ENCODE measurements at regions of chr15 and their contacts with region 1.

Region 1: DNA sequence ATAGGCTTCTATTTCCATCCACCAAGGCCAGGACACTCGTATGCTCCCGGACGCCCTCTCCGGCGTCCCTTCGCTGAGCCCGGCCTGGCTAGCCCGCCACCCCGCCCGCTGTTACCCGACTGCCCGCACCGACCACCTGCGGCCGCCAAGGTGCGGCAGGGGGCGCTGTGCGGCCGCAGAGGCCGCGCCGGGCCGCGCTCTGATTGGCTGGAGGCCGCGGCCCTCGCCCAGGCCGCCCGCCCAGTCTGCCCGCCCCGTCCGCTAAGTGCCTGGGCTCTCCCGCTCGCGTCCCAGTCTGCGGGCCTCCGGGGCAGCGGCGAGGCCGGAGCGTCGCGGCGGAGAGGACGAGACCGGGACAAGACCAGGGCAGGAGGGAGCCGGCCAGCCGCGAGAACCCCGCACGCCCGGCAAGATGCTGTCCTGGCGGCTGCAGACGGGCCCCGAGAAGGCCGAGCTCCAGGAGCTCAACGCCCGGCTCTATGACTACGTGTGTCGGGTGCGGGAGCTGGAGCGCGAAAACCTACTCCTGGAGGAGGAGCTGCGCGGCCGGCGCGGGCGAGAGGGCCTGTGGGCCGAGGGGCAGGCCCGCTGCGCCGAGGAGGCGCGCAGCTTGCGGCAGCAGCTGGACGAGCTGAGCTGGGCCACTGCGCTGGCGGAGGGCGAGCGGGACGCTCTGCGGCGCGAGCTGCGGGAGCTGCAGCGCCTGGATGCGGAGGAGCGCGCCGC is at the start of gene SYNM:
- DNase-seq: no peak
- H3K4me3 ChIP-seq: peak within 1 kb of the TSS; percentile 43
- H3K27me3 ChIP-seq: peaks cover 9% of the 10 kb centered on the region; the same call in 1 of the 2 replicates
- CTCF ChIP-seq: peak; percentile 47
- polyA plus RNA-seq, gene SYNM: 1.8 TPM in 2 replicates

Region 2: GRCh38 chr15:99123706-99124451 is 18.9 kb after region 1 on chr15:
- CTCF ChIA-PET with region 1: interaction called, 15 read pairs
- POLR2A ChIA-PET with region 1: no interaction called
- DNase-seq: peak; percentile 92
- H3K4me3 ChIP-seq: peak overlapping the region; percentile 24
- H3K27me3 ChIP-seq: no peaks in the 10 kb centered on the region
- CTCF ChIP-seq: no peak

Region 3: DNA sequence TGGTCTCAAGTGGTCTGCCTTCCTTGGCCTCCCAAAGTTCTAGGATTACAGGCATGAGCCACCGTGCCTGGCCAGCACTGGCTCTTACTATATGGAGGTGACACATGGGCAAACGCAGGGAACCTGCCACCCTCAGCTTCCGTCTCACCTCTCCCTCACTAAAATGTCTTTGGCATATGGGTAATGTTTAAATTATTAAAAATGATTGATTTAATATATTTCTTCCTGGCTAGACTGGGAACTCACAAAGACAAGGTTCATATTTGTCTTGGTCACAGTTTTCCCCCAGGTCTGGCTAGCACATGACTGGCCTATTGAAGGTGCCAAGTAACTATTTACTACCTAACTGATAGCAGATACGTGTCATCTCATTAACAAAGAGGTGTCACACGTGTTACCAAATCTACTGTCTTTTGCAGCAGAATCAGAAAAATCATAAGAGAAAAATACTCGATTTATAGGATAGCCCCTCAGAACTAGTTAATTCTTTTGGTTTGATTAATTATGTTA is 48.1 kb after region 1 on chr15:
- CTCF ChIA-PET with region 1: no interaction called
- POLR2A ChIA-PET with region 1: no interaction called
- DNase-seq: no peak
- H3K4me3 ChIP-seq: no peak overlapping the region
- H3K27me3 ChIP-seq: no peaks in the 10 kb centered on the region
- CTCF ChIP-seq: no peak

Region 4: DNA sequence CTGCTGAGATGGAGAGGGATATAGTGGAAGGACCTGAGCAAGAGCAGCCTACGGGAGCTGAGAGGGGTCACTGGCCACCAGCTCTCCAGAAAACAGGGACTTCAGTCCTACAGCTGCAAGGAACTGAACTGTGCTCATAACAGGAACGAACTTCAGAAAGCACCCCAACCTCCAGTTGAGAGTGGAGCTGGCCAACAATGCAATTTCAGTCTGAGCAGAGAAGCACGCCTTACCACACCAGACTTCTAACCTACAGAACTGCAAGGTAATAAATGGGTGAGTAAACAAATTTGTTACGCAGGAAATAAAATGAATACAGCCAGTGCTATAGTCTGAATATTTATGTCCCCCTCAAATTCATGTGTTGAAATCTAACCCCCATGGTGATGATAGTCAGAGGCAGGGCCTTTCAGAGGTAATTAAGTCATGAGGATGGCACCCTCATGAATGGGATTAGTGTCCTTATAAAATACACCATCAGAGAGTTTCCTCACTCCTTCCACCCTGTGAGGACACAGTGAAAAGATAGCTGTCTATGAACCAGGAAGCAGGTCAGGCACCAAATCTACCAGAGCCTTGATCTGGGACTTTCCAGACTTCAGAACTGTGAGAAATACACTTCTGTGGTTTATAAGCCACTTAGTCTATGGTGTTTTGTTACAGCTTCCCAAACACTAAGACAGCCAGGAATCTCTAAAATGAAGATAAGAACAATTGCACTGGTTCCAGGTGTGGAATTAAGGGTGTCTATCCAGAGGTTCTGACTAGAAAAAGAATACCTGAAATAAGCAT is 58.5 kb after region 1 on chr15:
- CTCF ChIA-PET with region 1: interaction called, 10 read pairs
- POLR2A ChIA-PET with region 1: no interaction called
- DNase-seq: no peak
- H3K4me3 ChIP-seq: no peak overlapping the region
- H3K27me3 ChIP-seq: no peaks in the 10 kb centered on the region
- CTCF ChIP-seq: no peak